ENCODE measurements at regions of chr9 and their contacts with region 1.

Region 1: DNA sequence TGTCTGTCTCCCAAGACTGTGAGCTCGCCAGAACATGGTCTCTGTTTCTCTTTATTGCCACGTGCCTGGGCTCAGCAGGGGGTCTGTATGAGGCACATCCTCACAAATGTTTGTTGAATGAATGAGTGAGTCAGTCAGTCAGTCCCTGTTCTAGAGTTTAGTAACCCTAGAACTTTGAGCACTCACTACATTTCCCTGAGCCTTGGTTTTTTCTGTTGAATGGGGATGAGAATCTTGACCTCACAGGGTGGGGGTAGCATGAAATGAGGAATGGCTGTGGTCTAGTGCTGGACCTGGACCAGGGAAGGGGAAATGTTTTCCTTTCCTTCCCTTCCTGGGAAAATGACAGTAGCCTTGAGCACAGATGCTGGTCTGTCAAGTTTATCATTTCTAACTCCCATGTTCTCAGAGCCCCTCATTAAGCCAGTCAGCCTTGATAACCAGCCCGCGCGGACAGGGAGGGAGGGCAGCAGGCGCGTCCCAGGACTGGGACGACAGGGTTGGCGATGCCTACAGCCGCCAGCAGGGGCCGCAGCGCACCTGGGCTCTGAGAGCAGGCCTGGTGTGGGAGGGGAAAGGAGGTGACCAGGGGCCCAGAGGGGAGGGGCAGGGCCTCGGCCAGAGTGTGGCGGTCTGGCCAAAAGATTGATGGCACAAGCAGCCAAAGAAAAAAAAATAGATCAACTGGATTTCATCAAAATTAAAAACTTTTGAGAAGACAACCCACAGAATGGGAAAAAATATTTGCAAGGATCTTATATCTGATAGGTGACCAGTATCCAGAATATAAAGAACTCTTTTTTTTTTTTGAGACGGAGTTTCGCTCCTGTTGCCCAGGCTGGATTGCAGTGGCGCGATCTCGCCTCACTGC is 24.1 kb upstream of the WNK2 start:
- DNase-seq: peak; percentile 89
- H3K4me3 ChIP-seq: no peak overlapping the region
- H3K27ac ChIP-seq: no peak overlapping the region
- H3K4me1 ChIP-seq: peaks cover 0 to 31% (median 10%) of the 10 kb centered on the region in 4 donors
- H3K27me3 ChIP-seq: no peaks in the 10 kb centered on the region
- CTCF ChIP-seq: peak; percentile 92 to 98 (median 97)
- EP300 ChIP-seq: no peak
- POLR2A ChIP-seq: no peak

Region 2: DNA sequence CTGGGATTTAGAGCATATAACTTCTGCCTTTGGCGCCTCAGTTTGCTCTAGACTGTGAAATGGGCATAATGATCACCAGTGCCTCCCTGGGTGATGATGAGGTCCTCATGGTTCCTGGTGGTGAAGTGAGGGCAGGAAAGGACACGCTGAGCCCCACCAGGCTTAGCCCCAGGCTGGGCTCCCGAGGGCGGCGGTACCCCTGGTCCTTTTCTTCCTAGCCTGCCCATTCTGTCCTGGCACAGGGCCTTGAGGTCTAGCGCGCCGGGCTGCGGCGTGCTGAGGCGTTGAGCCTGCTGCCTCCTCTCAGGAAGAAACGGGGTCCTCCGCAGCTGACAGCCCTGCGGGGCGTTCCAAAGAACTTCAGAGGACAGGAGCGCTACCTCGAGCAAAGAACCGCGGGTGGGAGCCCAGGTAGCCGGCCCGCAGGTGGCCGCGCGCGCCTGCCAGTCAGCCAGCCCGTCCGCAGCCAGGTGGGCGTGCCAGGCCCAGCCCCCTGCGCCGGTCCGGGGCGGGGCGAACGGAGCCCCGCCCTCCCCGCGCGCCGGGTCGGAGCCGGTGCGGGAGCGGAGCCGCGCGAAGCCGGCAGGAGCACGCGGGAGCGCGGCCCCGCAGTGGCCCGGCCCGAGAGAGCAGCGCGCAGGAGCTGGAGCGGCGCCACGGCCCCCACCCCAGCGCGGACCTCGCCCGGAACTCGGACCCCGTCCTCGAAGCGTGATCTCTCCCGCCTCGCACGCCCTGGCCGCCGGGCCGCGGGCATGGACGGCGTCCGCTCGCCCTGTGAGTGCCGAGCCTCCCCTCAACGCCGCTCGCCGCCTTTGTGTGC is 24.0 kb after region 1 on chr9 and contains the start of gene WNK2:
- intact Hi-C with region 1: loop called (anchors 2 kb)
- DNase-seq: no peak
- H3K4me3 ChIP-seq: peak within 1 kb of the TSS; percentile 43 to 87 (median 60)
- H3K27ac ChIP-seq: peak within 1 kb of the TSS; percentile 81 to 89 (median 84)
- H3K4me1 ChIP-seq: peaks cover 4 to 58% (median 55%) of the 10 kb centered on the region in 4 donors
- H3K27me3 ChIP-seq: peaks cover 0 to 6% (median 0%) of the 10 kb centered on the region in 3 donors
- CTCF ChIP-seq: no peak
- EP300 ChIP-seq: no peak
- POLR2A ChIP-seq: no peak
- total RNA-seq, gene WNK2: 16.0 to 95.8 (median 29.0) TPM

Region 3: GRCh38 chr9:93207326-93207814 is 47.5 kb after region 1 on chr9:
- intact Hi-C with region 1: loop called (anchors 2 kb)
- DNase-seq: peak; percentile 87
- H3K4me3 ChIP-seq: peak overlapping the region in 3 of 4 donors; percentile 8 to 15 (median 9)
- H3K27ac ChIP-seq: peak overlapping the region; percentile 77 to 86 (median 84)
- H3K4me1 ChIP-seq: peaks cover 0 to 72% (median 69%) of the 10 kb centered on the region in 4 donors
- H3K27me3 ChIP-seq: no peaks in the 10 kb centered on the region
- CTCF ChIP-seq: no peak
- EP300 ChIP-seq: peak in 1 of 4 donors; percentile 26
- POLR2A ChIP-seq: no peak

Region 4: GRCh38 chr9:93365427-93366118 is 205.7 kb after region 1 on chr9:
- intact Hi-C with region 1: no loop called
- DNase-seq: no peak
- H3K4me3 ChIP-seq: no peak overlapping the region
- H3K27ac ChIP-seq: no peak overlapping the region
- H3K4me1 ChIP-seq: no peaks in the 10 kb centered on the region
- H3K27me3 ChIP-seq: no peaks in the 10 kb centered on the region
- CTCF ChIP-seq: no peak
- EP300 ChIP-seq: no peak
- POLR2A ChIP-seq: no peak

Measured in sigmoid colon (tissue), 7 donors.